ENCODE measurements at regions of chr19 and their contacts with region 1.

Region 1: DNA sequence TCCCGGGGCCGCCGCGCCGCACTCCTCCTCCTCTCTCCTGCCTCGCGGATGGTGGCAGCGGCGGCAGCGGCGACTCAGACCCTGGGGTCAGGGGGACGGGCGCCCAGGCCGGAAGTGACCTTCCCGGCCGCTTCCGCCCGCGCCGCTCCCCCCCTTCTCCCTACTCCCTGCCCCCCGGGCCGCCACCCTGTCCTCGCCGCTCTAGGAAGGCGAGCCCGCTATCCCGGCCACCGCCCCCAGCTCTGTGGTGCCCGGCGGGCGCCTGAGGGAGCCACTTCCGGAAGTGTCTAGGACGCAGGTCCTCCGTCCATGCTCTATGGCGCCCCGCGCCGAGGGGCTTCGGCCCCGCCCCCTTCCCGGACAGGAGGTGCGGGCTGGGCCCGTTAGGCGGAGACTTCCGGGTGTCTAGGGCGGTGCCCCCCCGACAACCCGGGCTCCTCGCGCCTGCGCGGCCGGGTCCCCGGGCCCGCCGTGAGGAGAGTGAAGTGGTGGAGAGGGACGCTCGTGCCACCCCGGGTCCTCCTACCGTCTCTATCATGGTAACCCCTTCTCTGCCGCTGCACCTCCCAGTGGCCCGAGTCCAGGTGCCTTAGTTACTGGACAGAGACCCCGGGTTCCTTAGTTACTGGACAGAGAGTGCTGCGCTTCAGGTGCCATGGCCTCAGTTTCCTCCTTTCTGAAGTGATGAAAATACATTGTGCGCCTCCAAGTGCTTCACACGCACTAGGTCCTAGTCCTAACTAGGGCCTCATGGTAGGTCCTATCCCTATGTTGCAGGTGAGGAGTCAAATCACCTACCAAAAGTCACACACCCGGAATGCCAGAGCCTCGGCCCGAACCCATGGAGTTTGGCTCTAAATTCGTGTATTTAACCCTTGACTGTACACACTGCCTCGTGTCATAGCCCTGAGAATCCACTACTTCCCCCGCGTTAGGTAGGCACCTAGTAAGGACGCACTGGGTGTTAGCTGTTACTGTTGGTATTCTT is at the start of gene ZNF787:
- DNase-seq: peak; percentile 95
- H3K4me3 ChIP-seq: peak within 1 kb of the TSS; percentile 73
- H3K27ac ChIP-seq: peak within 1 kb of the TSS; percentile 91
- H3K27me3 ChIP-seq: no peaks in the 10 kb centered on the region
- CTCF ChIP-seq: no peak; the same call in 1 of the 2 replicates
- polyA plus RNA-seq, gene ZNF787: 4.5 and 8.5 TPM in 2 replicates

Region 2: DNA sequence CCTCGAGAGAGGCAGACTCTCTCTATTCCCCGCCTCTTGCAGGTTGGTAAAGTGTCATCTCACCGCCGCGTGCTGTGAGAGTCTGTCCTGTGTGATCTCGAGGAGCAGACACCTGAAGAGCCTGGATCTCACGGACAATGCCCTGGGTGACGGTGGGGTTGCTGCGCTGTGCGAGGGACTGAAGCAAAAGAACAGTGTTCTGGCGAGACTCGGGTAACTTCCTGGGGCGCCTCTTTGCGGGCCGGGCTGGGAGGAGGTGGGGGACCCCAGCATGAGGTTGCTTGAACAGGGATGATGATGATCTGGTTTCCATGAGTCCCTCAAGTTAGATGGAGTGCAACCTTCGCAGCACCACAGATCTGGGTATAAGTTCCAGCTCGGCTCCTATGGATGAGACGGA is 67.9 kb before region 1 on chr19:
- CTCF ChIA-PET with region 1: no interaction called
- POLR2A ChIA-PET with region 1: no interaction called
- DNase-seq: no peak
- H3K4me3 ChIP-seq: no peak overlapping the region
- H3K27ac ChIP-seq: no peak overlapping the region
- H3K27me3 ChIP-seq: no peaks in the 10 kb centered on the region
- CTCF ChIP-seq: no peak

Region 3: DNA sequence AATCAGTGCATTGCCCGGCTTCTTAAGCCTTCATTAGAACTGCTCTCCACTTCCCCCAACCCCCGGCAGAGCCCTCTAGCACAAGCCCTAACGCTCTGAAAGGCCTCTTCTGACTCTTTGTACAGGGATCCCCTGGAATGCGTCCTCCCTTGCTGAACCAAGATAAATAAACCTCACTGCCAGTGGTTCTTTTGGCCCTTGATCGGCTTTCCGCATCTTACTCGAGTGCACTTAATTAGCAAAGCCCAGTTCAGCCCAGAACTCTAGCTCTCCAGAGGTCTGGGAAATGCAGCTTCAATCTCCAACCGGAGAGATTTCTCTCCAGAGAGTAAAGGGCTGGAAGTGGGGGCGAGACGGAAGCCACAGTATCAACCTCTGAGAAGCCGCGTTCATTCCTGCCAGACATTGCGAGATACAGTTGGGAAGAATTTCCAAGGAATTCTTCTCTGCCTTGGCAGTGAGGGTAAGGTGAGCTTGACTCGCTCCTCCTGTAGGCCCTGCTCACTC is 10.9 kb after region 1 on chr19:
- CTCF ChIA-PET with region 1: interaction called, 3 read pairs
- POLR2A ChIA-PET with region 1: interaction called, 10 read pairs
- DNase-seq: no peak
- H3K4me3 ChIP-seq: peak overlapping the region; percentile 13; the same call in 1 of the 2 replicates
- H3K27ac ChIP-seq: peak overlapping the region; percentile 77
- H3K27me3 ChIP-seq: no peaks in the 10 kb centered on the region
- CTCF ChIP-seq: no peak

Region 4: DNA sequence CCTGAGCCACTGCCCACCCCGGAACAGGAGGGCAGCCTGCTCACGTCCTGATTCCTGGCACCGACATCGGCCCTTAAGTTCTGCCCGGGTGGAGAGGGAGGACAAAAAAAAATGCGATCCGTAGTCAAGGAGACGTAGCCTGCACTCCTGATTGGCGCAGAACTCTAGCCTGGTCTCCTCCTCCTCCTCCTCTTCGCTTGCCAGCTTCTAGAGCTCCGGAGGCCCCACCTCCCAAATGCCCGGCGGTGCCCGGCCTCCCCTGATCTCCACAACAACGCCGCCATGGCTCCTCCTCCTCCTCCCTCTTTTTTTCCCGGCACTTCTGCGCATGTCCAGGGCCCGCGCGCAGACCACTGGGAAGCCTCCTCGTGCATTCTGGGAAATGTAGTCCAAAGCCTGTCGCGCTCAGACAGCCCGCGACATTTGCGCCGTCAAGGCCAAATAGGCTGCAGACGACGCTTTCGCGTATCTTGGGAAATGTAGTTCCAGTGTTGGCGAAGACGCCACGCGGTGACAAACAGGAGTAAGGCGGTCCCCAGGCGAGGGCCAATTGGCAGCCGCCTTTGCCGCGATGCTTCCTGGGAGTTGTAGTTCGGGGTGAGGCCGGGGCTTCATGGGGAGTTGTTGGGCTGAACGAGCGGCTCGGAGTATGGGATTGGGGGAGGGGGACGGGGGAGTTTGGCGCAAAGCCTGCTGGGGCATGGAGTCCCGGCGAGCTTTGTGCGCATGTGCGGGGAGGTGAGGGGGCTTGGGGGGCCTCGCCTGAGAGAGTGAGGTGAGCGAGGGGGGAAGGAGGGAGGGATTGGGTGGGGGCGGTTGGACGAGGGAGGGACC is 19.3 kb after region 1 on chr19 and contains the start of gene ZNF444:
- CTCF ChIA-PET with region 1: interaction called, 3 read pairs
- POLR2A ChIA-PET with region 1: interaction called, 12 read pairs
- DNase-seq: peak; percentile 99
- H3K4me3 ChIP-seq: peak within 1 kb of the TSS; percentile 75
- H3K27ac ChIP-seq: peak within 1 kb of the TSS; percentile 87
- H3K27me3 ChIP-seq: no peaks in the 10 kb centered on the region
- CTCF ChIP-seq: no peak
- polyA plus RNA-seq, gene ZNF444: 9.9 and 11.6 TPM in 2 replicates

Region 5: DNA sequence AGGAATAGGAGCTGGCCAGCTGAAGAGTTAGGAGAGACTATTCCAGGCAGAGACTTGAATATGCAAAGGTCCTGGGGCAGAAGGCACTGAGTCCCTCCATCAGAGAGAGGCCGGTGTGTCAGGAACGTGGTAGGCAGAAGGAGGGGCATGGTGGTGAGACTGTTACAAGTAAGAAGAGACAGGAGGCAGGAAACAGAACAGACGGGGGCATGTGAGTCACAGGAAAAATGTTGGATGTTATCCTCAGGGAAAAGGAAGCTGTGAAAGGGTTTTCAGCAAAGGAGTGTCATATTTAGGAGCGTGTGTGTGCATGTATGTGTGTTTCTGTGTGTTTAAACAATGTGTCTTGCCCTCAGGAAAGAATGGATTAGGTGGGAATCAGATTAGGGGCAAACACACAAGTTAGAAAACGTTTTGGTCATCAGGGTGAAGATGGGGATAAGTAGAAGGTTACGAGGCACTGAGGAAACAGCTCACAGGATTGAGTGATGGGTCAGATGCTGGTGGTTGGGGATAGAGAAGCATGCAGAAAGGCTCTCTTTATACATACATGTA is 152.2 kb after region 1 on chr19:
- CTCF ChIA-PET with region 1: interaction called, 11 read pairs
- POLR2A ChIA-PET with region 1: no interaction called
- DNase-seq: no peak
- H3K4me3 ChIP-seq: no peak overlapping the region
- H3K27ac ChIP-seq: no peak overlapping the region
- H3K27me3 ChIP-seq: no peaks in the 10 kb centered on the region
- CTCF ChIP-seq: no peak